ENCODE measurements at regions of chr11 and their contacts with region 1.

Region 1: DNA sequence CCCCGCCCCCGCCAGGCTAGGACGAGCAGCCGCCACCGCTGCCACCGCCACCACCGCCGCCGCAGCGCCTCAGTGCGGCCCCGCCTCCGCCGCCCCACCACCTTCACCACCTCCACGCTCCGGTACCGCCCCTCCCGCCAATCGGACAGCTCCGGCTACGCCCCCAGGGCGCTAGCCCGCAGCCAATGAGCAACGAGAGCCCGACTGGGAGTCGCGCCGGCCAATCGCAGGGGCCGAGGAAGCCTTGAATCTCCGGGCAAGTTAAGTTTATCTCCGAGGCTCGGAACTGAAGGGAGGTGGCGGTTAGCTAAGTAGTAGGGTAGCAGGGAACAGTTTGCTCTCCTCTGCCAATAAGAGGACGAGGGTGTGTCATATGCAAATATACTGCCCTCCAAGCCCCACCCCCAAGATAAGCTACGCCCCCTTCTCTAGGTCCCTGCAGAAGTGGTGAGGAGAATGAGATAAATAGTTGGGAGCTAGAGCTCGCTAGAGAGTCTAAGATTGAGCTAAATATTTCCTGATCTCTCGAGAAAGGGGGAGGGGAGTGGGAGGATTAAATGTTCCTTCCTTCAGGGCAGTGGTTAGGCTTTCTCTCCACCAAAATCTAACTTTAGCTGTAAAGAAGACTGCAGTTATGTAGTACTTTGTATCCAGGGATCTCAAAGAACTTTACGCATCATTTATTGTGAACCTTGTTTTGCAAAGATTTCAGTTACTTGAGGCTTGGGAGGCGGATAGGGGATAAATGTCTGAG is at the start of gene SESN3:
- DNase-seq: peak; percentile 100
- H3K4me3 Mint-ChIP-seq: no peak within 1 kb of the TSS
- H3K27ac Mint-ChIP-seq: peak within 1 kb of the TSS; percentile 92
- H3K4me1 Mint-ChIP-seq: peaks cover 28% of the 10 kb centered on the region
- H3K27me3 Mint-ChIP-seq: no peaks in the 10 kb centered on the region
- total RNA-seq, gene SESN3: 63.4 and 64.2 TPM in 2 replicates

Region 2: GRCh38 chr11:95193541-95193940 is 37.8 kb before region 1 on chr11:
- intact Hi-C with region 1: no loop called
- DNase-seq: no peak
- H3K4me3 Mint-ChIP-seq: no peak overlapping the region
- H3K27ac Mint-ChIP-seq: no peak overlapping the region
- H3K4me1 Mint-ChIP-seq: peaks cover 9% of the 10 kb centered on the region
- H3K27me3 Mint-ChIP-seq: no peaks in the 10 kb centered on the region

Region 3: GRCh38 chr11:95254131-95254704 is 22.9 kb after region 1 on chr11:
- intact Hi-C with region 1: loop called (anchors 1 kb)
- DNase-seq: peak; percentile 94
- H3K4me3 Mint-ChIP-seq: peak overlapping the region; percentile 73
- H3K27ac Mint-ChIP-seq: peak overlapping the region; percentile 79
- H3K4me1 Mint-ChIP-seq: peaks cover 32% of the 10 kb centered on the region
- H3K27me3 Mint-ChIP-seq: no peaks in the 10 kb centered on the region

Region 4: GRCh38 chr11:95337175-95337957 is 106.1 kb after region 1 on chr11:
- intact Hi-C with region 1: loop called (anchors 2 kb)
- DNase-seq: peak; percentile 90
- H3K4me3 Mint-ChIP-seq: no peak overlapping the region
- H3K27ac Mint-ChIP-seq: no peak overlapping the region
- H3K4me1 Mint-ChIP-seq: peaks cover 10% of the 10 kb centered on the region
- H3K27me3 Mint-ChIP-seq: peaks cover 2% of the 10 kb centered on the region

Region 5: DNA sequence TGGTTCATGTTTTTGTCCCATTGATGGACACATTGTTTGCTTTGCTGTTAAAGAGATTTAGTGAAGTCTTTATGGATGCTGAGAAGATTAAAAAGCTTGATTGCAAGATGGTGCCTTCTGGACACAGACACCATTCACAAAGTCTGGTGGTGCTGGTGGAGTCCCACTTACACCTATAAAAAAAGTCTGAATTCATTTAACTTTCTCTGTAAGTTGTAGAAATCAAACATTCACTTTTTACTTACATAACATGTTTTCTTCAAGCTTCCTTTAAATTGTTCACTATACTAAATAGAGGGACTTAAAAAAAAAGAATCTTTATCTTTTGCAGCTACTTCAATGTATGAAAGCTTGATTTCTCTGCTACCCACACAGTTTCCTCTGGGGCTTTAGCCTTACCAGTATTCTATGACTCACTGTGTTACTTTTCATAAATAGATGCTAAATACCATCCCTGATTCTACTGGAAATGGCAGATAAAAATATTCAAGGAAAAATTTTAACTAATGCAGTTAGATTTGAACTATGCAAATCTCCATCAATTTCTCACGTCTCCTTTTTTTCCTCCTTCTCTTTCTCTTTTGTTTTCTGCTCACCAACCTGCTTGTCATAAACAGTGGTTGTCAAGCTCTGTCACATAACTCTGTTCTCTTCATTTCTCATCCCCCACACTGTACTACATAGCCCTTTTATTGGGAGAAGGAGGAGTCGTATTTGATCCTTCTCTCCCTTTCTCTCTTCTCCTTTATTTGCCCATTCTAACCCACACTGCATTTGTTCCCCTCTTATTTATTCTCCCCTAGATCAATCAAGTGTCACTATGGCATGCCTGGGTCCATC is 468.5 kb after region 1 on chr11:
- intact Hi-C with region 1: loop called (anchors 1 kb)
- DNase-seq: no peak
- H3K4me3 Mint-ChIP-seq: peak overlapping the region; percentile 79
- H3K27ac Mint-ChIP-seq: peak overlapping the region; percentile 98
- H3K4me1 Mint-ChIP-seq: peaks cover 55% of the 10 kb centered on the region
- H3K27me3 Mint-ChIP-seq: no peaks in the 10 kb centered on the region

Region 6: DNA sequence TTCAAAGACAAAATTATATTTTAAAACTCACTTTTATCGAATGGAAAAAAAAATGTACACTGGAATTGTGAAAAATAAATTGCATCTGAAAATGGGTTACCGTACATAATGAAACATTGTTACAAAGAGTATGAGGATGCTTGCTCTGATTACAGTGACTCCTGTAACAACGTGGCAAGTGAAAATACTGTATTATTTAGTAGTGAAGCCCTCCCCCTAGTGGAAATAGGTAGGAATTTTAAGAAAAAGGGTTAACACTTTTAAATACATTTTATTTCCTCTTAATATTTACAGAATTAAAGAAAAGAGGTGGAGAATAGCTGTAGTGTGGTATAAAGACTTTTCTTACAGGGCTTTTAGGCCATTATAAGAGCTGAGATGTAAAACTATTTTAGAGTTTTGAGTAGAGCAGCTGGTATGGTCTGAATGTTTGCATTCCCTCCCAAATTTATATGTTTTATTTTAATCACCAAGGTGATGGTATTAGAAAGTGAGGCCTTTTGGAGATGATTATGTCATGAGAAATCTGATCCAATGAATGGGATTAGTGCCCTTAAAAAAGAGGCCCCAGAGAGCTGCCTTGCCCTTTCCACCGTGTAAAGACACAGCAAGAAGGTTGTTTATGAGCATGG is 533.1 kb after region 1 on chr11:
- intact Hi-C with region 1: loop called (anchors 5 kb)
- DNase-seq: peak; percentile 66
- H3K4me3 Mint-ChIP-seq: no peak overlapping the region
- H3K27ac Mint-ChIP-seq: no peak overlapping the region
- H3K4me1 Mint-ChIP-seq: peaks cover 6% of the 10 kb centered on the region
- H3K27me3 Mint-ChIP-seq: peaks cover 2% of the 10 kb centered on the region

Measured in activated CD4-positive, alpha-beta T cell treated with anti-CD3 and anti-CD28 coated beads, Interleukin-2, amount 10 ng/mL, durations not matched to agents 24 days and 14 days (primary cell).